ENCODE measurements at regions of chr11 and their contacts with region 1.

Region 1: GRCh38 chr11:12087075-12088004 is 23.1 kb upstream of the MICAL2 start:
- DNase-seq: no peak
- H3K4me3 ChIP-seq: peak overlapping the region; percentile 44
- H3K27me3 ChIP-seq: no peaks in the 10 kb centered on the region
- CTCF ChIP-seq: peak; percentile 41

Region 2: GRCh38 chr11:11318961-11319360 is 768.4 kb before region 1 on chr11:
- CTCF ChIA-PET with region 1: no interaction called
- POLR2A ChIA-PET with region 1: no interaction called
- DNase-seq: no peak
- H3K4me3 ChIP-seq: no peak overlapping the region
- H3K27me3 ChIP-seq: no peaks in the 10 kb centered on the region
- CTCF ChIP-seq: no peak

Region 3: GRCh38 chr11:11993839-11994238 is 93.5 kb before region 1 on chr11:
- CTCF ChIA-PET with region 1: no interaction called
- POLR2A ChIA-PET with region 1: interaction called, 12 read pairs
- DNase-seq: no peak
- H3K4me3 ChIP-seq: no peak overlapping the region
- H3K27me3 ChIP-seq: no peaks in the 10 kb centered on the region
- CTCF ChIP-seq: no peak

Region 4: DNA sequence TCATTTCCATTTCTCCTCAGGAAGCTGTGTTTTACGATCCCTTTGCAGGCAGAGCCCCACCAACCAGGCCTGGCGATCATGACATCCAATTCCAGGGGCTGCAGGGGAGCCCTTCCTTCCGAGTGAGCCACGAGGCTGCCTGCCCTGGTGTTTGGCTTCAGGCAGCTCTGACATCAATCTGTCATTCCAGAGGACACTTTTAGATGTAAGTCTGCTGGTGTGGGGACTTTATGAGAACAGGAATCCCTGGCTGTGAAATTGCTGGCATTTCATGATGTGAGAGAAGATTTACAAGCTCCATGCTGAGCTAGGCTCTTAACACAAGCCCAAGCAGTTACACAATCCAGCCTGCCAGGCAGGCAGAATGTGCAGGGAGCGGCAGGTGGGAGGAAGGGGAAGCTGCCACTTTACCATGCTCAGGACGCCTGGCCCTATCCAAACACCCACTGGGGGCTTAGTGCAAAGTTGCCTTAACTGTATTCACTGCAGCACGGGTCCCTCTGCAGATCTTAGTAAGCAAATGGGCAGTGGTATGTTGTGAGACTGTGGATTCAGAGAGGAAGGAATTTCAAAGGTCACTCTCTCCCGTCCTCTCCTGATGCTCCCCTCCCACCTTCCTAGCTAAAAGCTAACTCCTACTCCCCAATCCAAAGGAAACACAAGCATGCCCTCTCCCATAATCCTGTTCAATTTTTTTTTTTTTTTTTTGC is 20.4 kb before region 1 on chr11:
- CTCF ChIA-PET with region 1: interaction called, 12 read pairs
- POLR2A ChIA-PET with region 1: interaction called, 19 read pairs
- DNase-seq: peak; percentile 95
- H3K4me3 ChIP-seq: no peak overlapping the region
- H3K27me3 ChIP-seq: no peaks in the 10 kb centered on the region
- CTCF ChIP-seq: no peak

Region 5: GRCh38 chr11:12075822-12076821 is 11.2 kb before region 1 on chr11:
- CTCF ChIA-PET with region 1: interaction called, 16 read pairs
- POLR2A ChIA-PET with region 1: interaction called, 16 read pairs
- DNase-seq: peak; percentile 100
- H3K4me3 ChIP-seq: no peak overlapping the region
- H3K27me3 ChIP-seq: no peaks in the 10 kb centered on the region
- CTCF ChIP-seq: no peak

Region 6: GRCh38 chr11:12235947-12236743 is 148.8 kb after region 1 on chr11:
- CTCF ChIA-PET with region 1: interaction called, 44 read pairs
- POLR2A ChIA-PET with region 1: interaction called, 8 read pairs
- DNase-seq: no peak
- H3K4me3 ChIP-seq: no peak overlapping the region
- H3K27me3 ChIP-seq: no peaks in the 10 kb centered on the region
- CTCF ChIP-seq: peak; percentile 66

Region 7: DNA sequence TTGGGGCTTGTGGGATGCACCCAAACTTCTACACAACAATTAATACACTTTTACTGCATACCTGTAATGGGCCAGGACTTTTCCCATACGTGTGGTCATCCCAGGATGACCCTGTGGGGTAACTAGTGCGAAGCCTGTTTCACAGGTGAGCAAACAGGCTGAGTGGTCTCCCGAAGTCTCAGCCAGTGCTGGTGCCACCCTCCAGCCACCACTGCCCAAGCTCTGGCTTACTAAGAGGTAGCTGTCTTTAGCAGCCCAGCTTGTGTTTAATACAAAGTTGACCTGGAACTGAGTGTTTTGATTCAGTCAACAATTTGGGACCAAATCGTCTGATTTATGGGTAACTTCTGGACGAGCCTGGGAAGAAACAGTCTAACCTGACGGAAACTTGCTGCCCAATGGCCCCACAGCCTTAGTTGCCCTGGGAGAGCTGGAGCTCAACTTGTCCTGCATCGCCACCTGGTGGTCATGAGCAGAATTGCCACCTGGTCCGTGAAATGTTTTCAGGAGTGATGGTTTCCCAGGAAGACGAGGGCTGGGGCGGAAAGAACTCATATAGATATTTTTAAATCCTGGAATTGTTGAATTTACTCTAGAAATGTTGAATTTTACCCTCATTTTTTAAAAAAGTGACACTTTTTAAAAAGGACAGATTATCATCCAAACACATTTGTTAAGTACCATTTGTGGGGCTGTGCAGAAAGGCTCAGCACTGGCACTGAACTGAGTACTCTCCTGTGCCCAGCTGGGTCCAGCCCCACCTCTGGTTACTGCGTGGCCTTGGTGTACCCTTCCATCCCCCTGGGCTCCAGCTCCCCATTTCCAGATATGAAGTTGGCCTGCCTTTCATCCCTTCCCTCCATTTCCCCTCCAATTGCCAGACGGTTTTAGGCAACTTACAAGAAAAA is 194.5 kb after region 1 on chr11:
- CTCF ChIA-PET with region 1: interaction called, 30 read pairs
- POLR2A ChIA-PET with region 1: interaction called, 12 read pairs
- DNase-seq: no peak
- H3K4me3 ChIP-seq: no peak overlapping the region
- H3K27me3 ChIP-seq: no peaks in the 10 kb centered on the region
- CTCF ChIP-seq: peak; percentile 88

Region 8: GRCh38 chr11:12288212-12288930 is 201.0 kb after region 1 on chr11:
- CTCF ChIA-PET with region 1: interaction called, 6 read pairs
- POLR2A ChIA-PET with region 1: interaction called, 12 read pairs
- DNase-seq: peak; percentile 64
- H3K4me3 ChIP-seq: no peak overlapping the region
- H3K27me3 ChIP-seq: no peaks in the 10 kb centered on the region
- CTCF ChIP-seq: peak; percentile 98